Right lobe of liver (tissue), 6 donors: ENCODE measurements at regions of chr18 and their contacts with region 1.

Region 1: DNA sequence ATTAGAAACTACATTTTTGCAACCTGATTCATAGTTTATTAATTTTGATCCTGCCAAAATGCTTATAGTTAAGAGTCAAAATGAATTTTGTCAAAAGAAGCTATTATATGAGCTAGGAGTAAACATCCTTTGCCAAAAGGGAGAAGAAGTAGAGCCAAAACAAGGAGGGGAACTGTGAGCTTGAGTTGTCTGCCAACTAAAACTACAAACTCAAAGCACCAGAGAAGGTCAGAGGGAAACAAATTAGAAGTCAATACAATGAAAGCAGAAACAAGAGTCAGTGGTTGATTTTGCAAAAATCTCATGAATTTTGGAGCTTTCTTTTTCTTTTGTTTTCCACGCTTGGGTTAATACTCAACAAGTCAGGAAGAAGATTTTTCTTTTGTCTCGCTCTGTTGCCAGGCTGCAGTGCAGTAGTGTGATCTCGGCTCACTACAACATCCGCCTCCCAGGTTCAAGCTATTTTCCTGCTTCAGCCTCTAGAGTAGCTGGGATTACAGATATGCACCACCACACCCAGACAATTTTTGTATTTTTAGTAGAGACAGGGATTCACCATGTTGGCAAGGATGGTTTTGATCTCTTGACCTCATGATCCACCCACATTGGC is 508.5 kb downstream of the RIT2 start:
- DNase-seq: no peak
- ATAC-seq: no peak
- H3K4me3 ChIP-seq: no peak overlapping the region
- H3K27ac ChIP-seq: no peak overlapping the region
- H3K4me1 ChIP-seq: no peaks in the 10 kb centered on the region
- H3K27me3 ChIP-seq: no peaks in the 10 kb centered on the region
- CTCF ChIP-seq: no peak
- POLR2A ChIP-seq: no peak

Region 2: DNA sequence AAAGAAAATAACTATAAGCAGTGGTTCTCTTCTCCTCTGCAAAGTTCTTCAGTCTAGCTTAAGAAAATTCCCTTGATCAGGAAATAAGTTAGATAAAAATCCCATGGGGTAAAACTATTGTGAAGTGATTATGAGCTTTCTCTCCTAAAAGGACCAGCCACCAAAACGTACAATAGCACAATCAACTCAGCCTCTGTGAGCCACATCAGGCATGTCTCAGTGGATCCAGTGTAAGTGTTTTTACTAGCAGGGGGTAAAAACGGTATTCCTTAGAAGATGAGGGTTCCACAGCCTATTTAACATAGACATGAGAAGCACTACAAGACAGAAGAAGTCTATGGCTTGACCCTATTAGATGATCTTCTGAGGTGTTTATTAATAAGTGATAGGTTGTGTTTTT is 148.8 kb before region 1 on chr18:
- intact Hi-C with region 1: no loop called
- DNase-seq: no peak
- ATAC-seq: no peak
- H3K4me3 ChIP-seq: no peak overlapping the region
- H3K27ac ChIP-seq: no peak overlapping the region
- H3K4me1 ChIP-seq: no peaks in the 10 kb centered on the region
- H3K27me3 ChIP-seq: no peaks in the 10 kb centered on the region
- CTCF ChIP-seq: no peak
- POLR2A ChIP-seq: no peak

Region 3: DNA sequence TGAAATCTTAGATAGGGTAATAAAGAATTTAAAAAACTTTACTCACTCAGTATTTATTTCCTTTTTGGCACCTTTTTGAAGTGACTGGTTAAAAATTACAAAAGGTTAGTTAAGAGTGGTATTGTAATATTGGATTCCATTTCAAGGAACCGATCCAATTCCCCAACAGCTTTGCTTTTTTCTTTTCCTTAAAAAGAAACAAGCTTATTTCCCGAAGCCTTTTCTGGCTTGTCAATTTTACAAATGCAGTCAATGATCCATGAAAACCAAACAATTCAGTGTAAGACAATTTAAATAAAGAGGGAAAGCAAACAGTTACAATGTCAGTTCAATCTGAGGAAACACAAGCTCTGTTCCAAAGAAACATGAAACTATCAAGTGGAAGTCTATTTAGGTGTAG is 308.3 kb after region 1 on chr18:
- intact Hi-C with region 1: no loop called
- DNase-seq: no peak
- ATAC-seq: peak in 2 of 4 donors; percentile 51 to 55
- H3K4me3 ChIP-seq: no peak overlapping the region
- H3K27ac ChIP-seq: no peak overlapping the region
- H3K4me1 ChIP-seq: no peaks in the 10 kb centered on the region
- H3K27me3 ChIP-seq: no peaks in the 10 kb centered on the region
- CTCF ChIP-seq: no peak
- POLR2A ChIP-seq: no peak

Region 4: GRCh38 chr18:43265465-43265864 is 658.5 kb after region 1 on chr18:
- intact Hi-C with region 1: loop called in 1 of 2 experiments (anchors 10 kb)
- DNase-seq: no peak
- ATAC-seq: no peak
- H3K4me3 ChIP-seq: no peak overlapping the region
- H3K27ac ChIP-seq: no peak overlapping the region
- H3K4me1 ChIP-seq: no peaks in the 10 kb centered on the region
- H3K27me3 ChIP-seq: no peaks in the 10 kb centered on the region
- CTCF ChIP-seq: no peak
- POLR2A ChIP-seq: no peak

Region 5: DNA sequence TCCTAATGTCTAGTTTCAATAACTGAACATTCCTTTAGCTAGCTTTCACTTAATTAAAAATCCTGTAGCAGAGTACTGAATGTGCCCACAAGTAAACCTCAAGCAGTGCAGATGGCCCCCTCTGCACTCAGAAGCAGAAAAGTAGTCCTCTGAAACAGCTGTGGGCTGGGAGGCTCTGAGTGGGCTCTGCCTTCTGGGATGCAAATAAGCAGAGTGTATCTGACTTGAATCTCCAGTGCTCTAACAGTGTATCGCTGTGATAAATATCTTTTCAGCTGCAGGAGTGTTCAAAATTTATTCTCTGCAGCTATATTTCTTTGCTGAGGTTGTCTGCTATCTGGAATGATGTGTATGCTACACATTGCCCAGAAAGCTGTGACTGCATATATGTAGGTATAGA is 715.1 kb after region 1 on chr18:
- intact Hi-C with region 1: no loop called
- DNase-seq: no peak
- ATAC-seq: no peak
- H3K4me3 ChIP-seq: no peak overlapping the region
- H3K27ac ChIP-seq: no peak overlapping the region
- H3K4me1 ChIP-seq: no peaks in the 10 kb centered on the region
- H3K27me3 ChIP-seq: no peaks in the 10 kb centered on the region
- CTCF ChIP-seq: no peak
- POLR2A ChIP-seq: no peak